Activated T-helper 2 cell treated with anti-CD3 and anti-CD28 coated beads, Interferon-gamma antibody, Interleukin-2, Interleukin-4, amounts not matched to agents 10 μg/mL and 5 μg/mL and 100 μg/mL, durations not matched to agents 14 hours and 24 hours and 36 hours (primary cell): ENCODE measurements at regions of chr3 and their contacts with region 1.

Region 1: GRCh38 chr3:177787279-177788041 is 590.2 kb upstream of the TBL1XR1 start:
- DNase-seq: no peak
- H3K4me3 Mint-ChIP-seq: no peak overlapping the region
- H3K27ac Mint-ChIP-seq: peak overlapping the region; percentile 53
- H3K4me1 Mint-ChIP-seq: peaks cover 15% of the 10 kb centered on the region
- H3K27me3 Mint-ChIP-seq: no peaks in the 10 kb centered on the region

Region 2: DNA sequence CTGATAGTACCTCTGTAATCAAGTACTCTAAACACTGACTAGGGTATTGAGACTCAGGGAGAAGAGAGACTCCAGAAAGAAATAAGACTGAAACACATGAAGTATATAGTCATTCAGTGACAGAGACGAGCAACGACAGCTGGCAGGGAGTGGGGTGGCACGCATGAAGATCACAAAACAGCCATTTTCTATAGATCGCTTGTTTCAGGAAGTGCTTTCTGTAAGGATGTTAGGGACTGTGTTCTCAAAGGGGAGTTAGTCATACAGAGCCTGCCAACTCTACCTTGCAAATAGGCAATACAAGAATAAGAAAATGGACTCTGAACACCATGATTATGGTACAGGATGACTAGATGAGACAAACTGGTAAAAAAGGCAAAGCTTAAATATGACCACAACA is 729.7 kb before region 1 on chr3:
- intact Hi-C with region 1: loop called (anchors 5 kb)
- DNase-seq: peak; percentile 22
- H3K4me3 Mint-ChIP-seq: no peak overlapping the region
- H3K27ac Mint-ChIP-seq: no peak overlapping the region
- H3K4me1 Mint-ChIP-seq: peaks cover 22% of the 10 kb centered on the region
- H3K27me3 Mint-ChIP-seq: no peaks in the 10 kb centered on the region

Region 3: DNA sequence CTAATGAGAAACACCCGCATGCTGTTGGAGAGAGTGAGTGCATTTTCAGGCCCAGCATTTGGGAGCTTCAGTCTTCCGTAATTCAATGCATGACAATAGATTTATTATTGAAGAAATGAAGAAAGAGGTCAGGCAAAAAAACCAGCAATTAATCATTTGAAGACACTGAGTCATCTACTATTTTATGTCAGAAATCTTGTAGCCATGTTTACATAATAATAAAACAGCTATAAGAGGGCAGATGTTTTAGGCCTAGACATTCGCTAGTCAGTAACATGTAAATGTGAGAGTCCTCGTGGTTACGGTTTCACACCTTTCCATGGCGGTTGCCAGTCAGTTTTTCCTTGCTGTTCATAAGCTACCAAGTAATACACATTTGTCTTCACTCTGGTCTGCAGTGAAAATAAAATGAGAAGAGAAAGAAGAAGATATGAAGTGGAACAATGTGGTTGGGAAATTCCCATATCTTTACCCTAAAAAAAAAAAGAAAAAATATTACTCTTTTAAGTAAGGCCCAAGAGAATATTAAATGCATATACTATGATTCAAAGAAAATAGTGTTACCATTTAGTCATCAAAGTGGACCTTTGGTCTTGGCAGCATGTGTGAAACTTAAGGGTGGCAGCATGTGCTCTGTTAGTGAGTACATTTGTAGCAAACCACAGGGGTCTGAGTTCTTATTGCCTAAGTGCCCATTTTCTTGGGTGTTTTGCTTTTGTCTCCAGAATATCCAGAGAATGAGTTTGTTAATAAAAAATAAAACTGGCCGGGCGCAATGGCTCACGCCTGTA is 449.7 kb before region 1 on chr3:
- intact Hi-C with region 1: loop called (anchors 1 kb)
- DNase-seq: peak; percentile 43
- H3K4me3 Mint-ChIP-seq: no peak overlapping the region
- H3K27ac Mint-ChIP-seq: peak overlapping the region; percentile 87
- H3K4me1 Mint-ChIP-seq: peaks cover 45% of the 10 kb centered on the region
- H3K27me3 Mint-ChIP-seq: no peaks in the 10 kb centered on the region

Region 4: GRCh38 chr3:177589911-177590381 is 197.5 kb before region 1 on chr3:
- intact Hi-C with region 1: loop called (anchors 1 kb)
- DNase-seq: no peak
- H3K4me3 Mint-ChIP-seq: no peak overlapping the region
- H3K27ac Mint-ChIP-seq: peak overlapping the region; percentile 9
- H3K4me1 Mint-ChIP-seq: peaks cover 32% of the 10 kb centered on the region
- H3K27me3 Mint-ChIP-seq: peaks cover 4% of the 10 kb centered on the region

Region 5: GRCh38 chr3:177800561-177800960 is 13.1 kb after region 1 on chr3:
- intact Hi-C with region 1: loop called (anchors 1 kb)
- DNase-seq: no peak
- H3K4me3 Mint-ChIP-seq: no peak overlapping the region
- H3K27ac Mint-ChIP-seq: no peak overlapping the region
- H3K4me1 Mint-ChIP-seq: peaks cover 20% of the 10 kb centered on the region
- H3K27me3 Mint-ChIP-seq: peaks cover 3% of the 10 kb centered on the region

Region 6: DNA sequence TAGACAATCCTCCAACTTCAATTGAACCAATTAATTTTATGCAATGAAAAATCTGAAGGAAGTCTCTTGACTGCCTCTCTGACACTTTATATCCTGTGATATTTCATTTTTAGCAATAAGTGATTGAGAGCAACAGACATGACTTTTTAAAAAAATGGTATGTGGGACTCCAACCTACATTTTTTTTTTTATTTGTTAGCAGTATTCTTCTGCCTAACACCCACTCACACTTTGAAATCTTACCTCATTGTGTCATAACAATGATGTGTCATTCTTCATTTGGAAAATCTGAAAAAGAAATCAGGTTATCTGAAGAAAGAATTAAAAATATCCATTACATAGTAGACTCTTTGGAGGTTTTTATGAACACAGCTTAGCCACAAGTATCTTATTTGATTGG is 207.5 kb after region 1 on chr3:
- intact Hi-C with region 1: loop called (anchors 2 kb)
- DNase-seq: no peak
- H3K4me3 Mint-ChIP-seq: no peak overlapping the region
- H3K27ac Mint-ChIP-seq: peak overlapping the region; percentile 84
- H3K4me1 Mint-ChIP-seq: peaks cover 23% of the 10 kb centered on the region
- H3K27me3 Mint-ChIP-seq: no peaks in the 10 kb centered on the region